PC-3 (cell line): ENCODE measurements at regions of chr11 and their contacts with region 1.

Region 1: GRCh38 chr11:28086569-28086968 is 21.4 kb downstream of the KIF18A start:
- DNase-seq: peak; percentile 80
- ATAC-seq: peak; percentile 70
- H3K4me3 ChIP-seq: no peak overlapping the region
- H3K27ac ChIP-seq: peak overlapping the region; percentile 74
- H3K4me1 ChIP-seq: peaks cover 41% of the 10 kb centered on the region
- H3K27me3 ChIP-seq: no peaks in the 10 kb centered on the region
- CTCF ChIP-seq: no peak

Region 2: DNA sequence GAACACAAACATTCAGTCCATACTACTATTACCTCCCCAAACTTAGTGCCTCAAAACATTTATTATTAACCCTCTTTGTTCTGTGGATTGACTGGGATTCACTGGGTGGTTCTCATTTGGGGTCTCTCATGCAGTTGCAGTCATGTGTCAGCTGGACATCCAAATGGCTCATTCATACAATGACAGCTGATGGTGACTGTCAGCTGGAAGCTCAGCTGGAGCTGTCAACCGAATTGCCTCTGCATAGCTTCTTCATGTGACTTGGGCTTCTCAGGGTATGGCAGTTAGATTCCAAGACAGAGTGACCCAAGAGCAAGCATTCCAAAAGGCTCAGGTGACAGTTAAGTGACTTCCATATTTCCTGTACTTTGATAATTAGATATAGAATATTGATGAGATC is 808.7 kb before region 1 on chr11:
- CTCF ChIA-PET with region 1: no interaction called
- POLR2A ChIA-PET with region 1: no interaction called
- intact Hi-C with region 1: no loop called
- DNase-seq: no peak
- ATAC-seq: no peak
- H3K4me3 ChIP-seq: no peak overlapping the region
- H3K27ac ChIP-seq: no peak overlapping the region
- H3K4me1 ChIP-seq: no peaks in the 10 kb centered on the region
- H3K27me3 ChIP-seq: no peaks in the 10 kb centered on the region
- CTCF ChIP-seq: no peak

Region 3: GRCh38 chr11:28049338-28050216 is 37.0 kb before region 1 on chr11:
- CTCF ChIA-PET with region 1: no interaction called
- POLR2A ChIA-PET with region 1: no interaction called
- intact Hi-C with region 1: loop called (anchors 5 kb)
- DNase-seq: peak; percentile 90
- ATAC-seq: peak; percentile 86
- H3K4me3 ChIP-seq: no peak overlapping the region
- H3K27ac ChIP-seq: peak overlapping the region; percentile 87
- H3K4me1 ChIP-seq: peaks cover 28% of the 10 kb centered on the region
- H3K27me3 ChIP-seq: no peaks in the 10 kb centered on the region
- CTCF ChIP-seq: no peak

Region 4: GRCh38 chr11:28072321-28072720 is 14.2 kb before region 1 on chr11:
- CTCF ChIA-PET with region 1: no interaction called
- POLR2A ChIA-PET with region 1: no interaction called
- intact Hi-C with region 1: no loop called
- DNase-seq: no peak
- ATAC-seq: no peak
- H3K4me3 ChIP-seq: no peak overlapping the region
- H3K27ac ChIP-seq: no peak overlapping the region
- H3K4me1 ChIP-seq: no peaks in the 10 kb centered on the region
- H3K27me3 ChIP-seq: no peaks in the 10 kb centered on the region
- CTCF ChIP-seq: no peak

Region 5: GRCh38 chr11:28123151-28123581 is 36.6 kb after region 1 on chr11:
- CTCF ChIA-PET with region 1: no interaction called
- POLR2A ChIA-PET with region 1: no interaction called
- intact Hi-C with region 1: no loop called
- DNase-seq: peak; percentile 58
- ATAC-seq: peak; percentile 97
- H3K4me3 ChIP-seq: no peak overlapping the region
- H3K27ac ChIP-seq: peak overlapping the region; percentile 46
- H3K4me1 ChIP-seq: peaks cover 12% of the 10 kb centered on the region
- H3K27me3 ChIP-seq: no peaks in the 10 kb centered on the region
- CTCF ChIP-seq: no peak